ENCODE measurements at regions of chr9 and their contacts with region 1.

Region 1: GRCh38 chr9:91131433-91131839 is 230.3 kb downstream of the AUH start:
- DNase-seq: peak; percentile 92
- H3K4me3 Mint-ChIP-seq: peak overlapping the region; percentile 32
- H3K27ac Mint-ChIP-seq: peak overlapping the region; percentile 90
- H3K4me1 Mint-ChIP-seq: peaks cover 26% of the 10 kb centered on the region
- H3K27me3 Mint-ChIP-seq: peaks cover 4% of the 10 kb centered on the region

Region 2: DNA sequence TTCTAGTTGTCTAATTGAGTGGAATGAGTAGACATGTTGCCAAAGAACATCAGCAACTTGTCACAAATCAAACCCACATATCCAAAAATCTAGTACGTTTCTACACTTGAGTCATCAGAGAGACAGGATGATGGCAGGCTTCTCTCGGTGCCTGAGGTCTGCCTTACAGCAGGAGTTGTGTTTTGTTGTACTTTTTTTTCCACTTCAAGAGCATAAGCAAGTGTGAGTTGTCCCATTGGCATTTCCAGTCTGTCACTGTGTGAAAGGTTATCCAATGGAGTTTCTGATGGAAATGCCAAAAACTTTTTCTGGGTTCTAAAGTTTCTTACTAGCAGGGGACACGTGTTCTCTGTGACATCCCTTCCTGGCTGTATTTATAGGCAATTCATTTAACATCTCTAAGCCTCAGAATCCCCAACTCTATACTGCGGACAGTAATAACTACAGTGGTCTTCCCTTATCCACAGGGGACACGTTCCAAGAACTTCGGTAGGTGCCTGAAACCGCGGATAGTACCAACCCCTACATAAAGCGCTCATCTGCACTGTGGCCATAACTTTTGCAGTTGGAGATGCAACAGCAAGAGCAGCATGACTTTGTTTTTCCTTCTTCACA is 83.3 kb before region 1 on chr9:
- CTCF ChIA-PET with region 1: interaction called, 3 read pairs
- POLR2A ChIA-PET with region 1: no interaction called
- intact Hi-C with region 1: loop called (anchors 1 kb)
- DNase-seq: peak; percentile 73
- H3K4me3 Mint-ChIP-seq: no peak overlapping the region
- H3K27ac Mint-ChIP-seq: peak overlapping the region; percentile 83
- H3K4me1 Mint-ChIP-seq: peaks cover 58% of the 10 kb centered on the region
- H3K27me3 Mint-ChIP-seq: peaks cover 40% of the 10 kb centered on the region

Region 3: DNA sequence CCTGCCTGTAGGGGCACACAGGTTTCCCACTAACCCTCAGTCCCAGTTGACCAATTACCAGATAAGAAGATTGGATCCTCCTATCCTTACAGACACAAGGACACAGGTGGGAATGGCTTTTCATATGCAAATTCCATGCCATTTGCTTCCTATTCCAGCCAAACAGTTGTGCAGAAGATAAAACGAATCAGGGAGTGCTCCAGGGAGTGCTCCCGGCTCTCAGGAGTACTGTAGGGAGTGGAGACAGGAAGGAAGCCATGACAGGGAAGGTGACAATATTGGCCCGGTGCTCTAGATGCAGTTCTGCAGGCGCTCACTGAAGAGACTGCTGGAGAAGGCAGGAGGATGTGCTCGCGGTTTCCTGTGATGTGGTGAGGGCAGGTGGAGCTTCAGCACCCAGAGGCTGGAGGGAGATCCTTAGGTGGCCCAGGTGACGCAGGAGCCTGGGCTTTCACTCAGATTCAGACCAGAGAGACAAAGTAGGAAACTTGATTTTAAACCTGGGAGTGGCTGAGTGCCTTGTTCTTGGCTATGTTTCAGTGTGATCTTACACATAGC is 29.7 kb before region 1 on chr9:
- CTCF ChIA-PET with region 1: interaction called, 4 read pairs
- POLR2A ChIA-PET with region 1: interaction called, 45 read pairs
- intact Hi-C with region 1: loop called (anchors 1 kb)
- DNase-seq: peak; percentile 95
- H3K4me3 Mint-ChIP-seq: peak overlapping the region; percentile 73
- H3K27ac Mint-ChIP-seq: peak overlapping the region; percentile 93
- H3K4me1 Mint-ChIP-seq: peaks cover 56% of the 10 kb centered on the region
- H3K27me3 Mint-ChIP-seq: peaks cover 5% of the 10 kb centered on the region

Region 4: GRCh38 chr9:91164724-91165520 is 33.5 kb after region 1 on chr9:
- CTCF ChIA-PET with region 1: interaction called, 3 read pairs
- POLR2A ChIA-PET with region 1: interaction called, 6 read pairs
- intact Hi-C with region 1: loop called (anchors 1 kb)
- DNase-seq: peak; percentile 88
- H3K4me3 Mint-ChIP-seq: peak overlapping the region; percentile 61
- H3K27ac Mint-ChIP-seq: peak overlapping the region; percentile 92
- H3K4me1 Mint-ChIP-seq: peaks cover 46% of the 10 kb centered on the region
- H3K27me3 Mint-ChIP-seq: no peaks in the 10 kb centered on the region

Region 5: DNA sequence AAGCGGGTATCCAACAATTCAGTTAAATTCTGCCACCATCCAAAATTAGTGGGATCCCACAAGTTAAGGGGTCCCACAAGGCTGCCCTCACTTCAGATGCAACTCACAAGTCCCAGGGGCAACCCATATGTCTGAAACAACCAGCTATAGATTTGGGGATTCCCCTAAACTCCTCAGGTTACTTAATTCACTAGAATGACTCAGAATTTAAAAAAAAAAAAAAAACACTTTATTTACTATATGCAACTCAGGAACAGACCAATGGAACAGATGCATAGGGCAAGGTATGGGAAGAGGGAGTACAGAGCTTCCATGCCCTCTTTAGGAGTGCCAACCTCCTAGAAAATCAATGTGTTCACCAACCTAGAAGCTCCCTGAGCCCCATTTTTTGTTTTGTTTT is 215.2 kb after region 1 on chr9:
- CTCF ChIA-PET with region 1: no interaction called
- POLR2A ChIA-PET with region 1: no interaction called
- intact Hi-C with region 1: loop called (anchors 1 kb)
- DNase-seq: no peak
- H3K4me3 Mint-ChIP-seq: no peak overlapping the region
- H3K27ac Mint-ChIP-seq: no peak overlapping the region
- H3K4me1 Mint-ChIP-seq: peaks cover 57% of the 10 kb centered on the region
- H3K27me3 Mint-ChIP-seq: no peaks in the 10 kb centered on the region